ENCODE measurements at regions of chr2 and their contacts with region 1.

Region 1: GRCh38 chr2:52356556-52356955 is 1324.6 kb upstream of the NRXN1 start:
- DNase-seq: no peak
- H3K4me3 ChIP-seq: no peak overlapping the region
- H3K4me3 Mint-ChIP-seq: no peak overlapping the region
- H3K27ac Mint-ChIP-seq: no peak overlapping the region
- H3K4me1 ChIP-seq: no peaks in the 10 kb centered on the region
- H3K4me1 Mint-ChIP-seq: no peaks in the 10 kb centered on the region
- H3K27me3 ChIP-seq: no peaks in the 10 kb centered on the region
- H3K27me3 Mint-ChIP-seq: no peaks in the 10 kb centered on the region
- CTCF ChIP-seq: no peak

Region 2: GRCh38 chr2:52017646-52018235 is 338.8 kb before region 1 on chr2:
- CTCF ChIA-PET with region 1: no interaction called
- POLR2A ChIA-PET with region 1: no interaction called
- intact Hi-C with region 1: loop called (anchors 5 kb)
- DNase-seq: no peak
- H3K4me3 ChIP-seq: no peak overlapping the region
- H3K4me3 Mint-ChIP-seq: no peak overlapping the region
- H3K27ac Mint-ChIP-seq: no peak overlapping the region
- H3K4me1 ChIP-seq: no peaks in the 10 kb centered on the region
- H3K4me1 Mint-ChIP-seq: no peaks in the 10 kb centered on the region
- H3K27me3 ChIP-seq: no peaks in the 10 kb centered on the region
- H3K27me3 Mint-ChIP-seq: no peaks in the 10 kb centered on the region
- CTCF ChIP-seq: no peak